ENCODE measurements at regions of chrX and their contacts with region 1.

Region 1: DNA sequence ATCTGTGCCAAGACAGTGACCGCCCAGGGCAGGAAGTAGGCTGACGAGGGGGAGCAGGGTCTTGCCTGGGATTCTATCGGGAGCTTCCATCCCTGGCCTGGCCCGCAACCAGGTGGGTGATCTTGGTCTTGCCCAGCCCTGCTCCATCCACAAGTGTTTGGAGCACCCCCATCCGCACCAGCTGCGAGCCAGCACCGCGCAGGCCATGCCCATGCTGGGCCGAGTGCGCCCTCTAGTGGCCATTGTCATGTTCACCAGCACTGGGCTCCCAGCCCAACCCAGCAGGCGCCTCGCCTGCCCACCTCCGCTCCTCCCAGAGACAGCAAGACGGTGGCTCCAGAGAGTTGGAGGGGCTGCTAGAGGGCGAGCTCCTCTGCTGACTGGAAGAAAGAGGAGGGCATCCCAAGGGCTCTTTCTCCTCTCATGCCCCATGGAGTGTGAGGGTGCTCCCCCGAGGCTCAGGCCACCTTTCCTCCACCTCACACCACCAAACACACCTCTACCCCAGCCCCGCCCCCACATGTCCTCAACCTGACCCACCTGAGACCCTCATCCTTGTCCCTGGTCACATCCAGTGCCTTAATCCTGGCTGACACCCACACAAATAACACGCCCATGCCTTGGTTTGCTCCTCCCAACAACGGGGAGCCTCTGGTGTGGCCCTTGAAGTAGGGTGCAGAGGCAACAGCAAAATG is 9.8 kb upstream of the ATP2B3 start:
- DNase-seq: peak; percentile 88
- ATAC-seq: peak; percentile 94

Region 2: DNA sequence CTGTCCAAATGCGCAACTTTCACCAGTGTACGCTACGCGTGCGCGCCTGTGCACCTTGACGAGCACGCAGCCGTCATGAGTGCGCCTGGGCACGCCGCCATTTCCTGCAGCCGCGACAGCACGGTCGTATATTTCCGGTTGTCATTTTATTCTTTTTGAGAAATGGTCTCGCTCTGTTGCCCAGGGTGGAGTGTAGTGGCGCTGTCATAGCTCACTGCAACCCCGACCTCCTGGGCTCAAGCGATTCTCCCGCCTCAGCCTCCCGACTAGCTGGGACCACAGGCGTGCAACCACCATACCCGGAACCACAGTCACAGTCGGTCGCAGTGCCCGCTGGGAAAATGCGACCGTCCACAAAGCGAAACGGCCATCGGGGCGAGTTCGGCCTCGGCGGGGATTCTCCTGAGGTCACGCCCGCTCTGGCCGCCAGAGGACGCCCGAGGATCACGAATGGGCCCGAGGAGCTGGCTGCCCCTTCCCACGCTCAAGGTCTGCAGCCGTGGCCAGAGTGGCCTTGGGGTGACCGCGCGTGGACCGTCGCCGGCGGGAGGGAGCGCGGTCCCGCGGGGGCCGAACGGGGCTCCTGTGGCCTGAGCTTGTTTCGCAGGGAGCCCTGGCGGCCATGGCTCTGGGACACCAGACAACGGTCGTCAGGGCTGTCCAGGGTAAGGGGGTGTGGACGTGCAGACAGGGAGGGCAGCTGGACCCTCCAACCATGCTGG is 475.1 kb before region 1 on chrX:
- intact Hi-C with region 1: loop called (anchors 5 kb)
- DNase-seq: peak; percentile 85
- ATAC-seq: peak; percentile 96

Region 3: DNA sequence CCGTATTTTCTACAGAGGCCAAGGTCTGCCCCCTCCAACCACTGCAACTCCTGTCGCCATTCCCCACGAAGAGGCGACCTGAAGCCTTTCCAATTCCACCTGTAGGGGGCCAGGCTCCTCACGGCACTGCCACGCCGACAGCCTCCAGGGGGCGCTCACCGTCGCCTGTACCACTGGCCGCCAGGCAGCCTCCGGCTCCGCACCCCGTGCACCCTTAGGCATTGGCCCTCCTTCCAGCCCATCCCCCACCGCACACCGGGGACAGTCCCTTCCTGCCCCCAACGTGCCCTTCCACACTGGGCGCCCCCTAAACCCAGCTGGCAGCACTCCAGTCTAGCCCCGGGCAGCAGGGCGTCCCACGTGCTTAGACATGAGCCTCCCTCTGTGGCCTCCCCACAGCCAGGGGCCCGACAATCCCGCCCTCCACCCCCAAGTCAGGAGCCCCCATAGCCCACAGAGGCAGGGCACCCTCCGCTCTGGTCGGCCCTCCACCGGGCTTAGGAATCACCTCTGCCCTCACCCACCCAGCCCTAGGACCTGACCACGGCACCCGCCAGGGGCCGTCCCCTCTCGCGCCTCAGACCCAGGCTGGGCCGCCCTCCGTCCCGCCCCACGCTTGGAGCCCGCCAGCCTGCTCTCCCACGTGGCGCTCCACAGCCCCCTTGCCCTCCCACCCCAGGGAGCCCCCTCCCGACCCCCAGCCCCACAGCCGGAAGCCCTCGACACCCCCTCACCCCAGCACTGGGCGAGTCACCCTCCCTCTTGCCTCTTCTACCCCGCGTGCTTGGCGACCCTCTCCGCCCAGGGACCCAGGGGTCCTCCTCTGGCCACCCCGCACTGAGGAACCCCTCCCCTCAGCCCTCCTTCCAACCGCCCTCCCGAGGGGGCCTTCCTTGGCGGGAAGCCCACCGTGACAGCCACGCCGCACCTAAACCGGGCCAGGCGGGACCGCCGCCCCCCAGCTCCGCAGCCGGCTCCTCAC is 107.2 kb before region 1 on chrX:
- intact Hi-C with region 1: no loop called
- DNase-seq: peak; percentile 64
- ATAC-seq: peak; percentile 41

Region 4: GRCh38 chrX:153470435-153471363 is 36.9 kb before region 1 on chrX and contains the start of gene HAUS7:
- intact Hi-C with region 1: loop called (anchors 5 kb)
- DNase-seq: peak; percentile 93
- ATAC-seq: peak; percentile 92
- total RNA-seq, gene HAUS7: 18.6 TPM